ENCODE measurements at regions of chr2 and their contacts with region 1.

Region 1: DNA sequence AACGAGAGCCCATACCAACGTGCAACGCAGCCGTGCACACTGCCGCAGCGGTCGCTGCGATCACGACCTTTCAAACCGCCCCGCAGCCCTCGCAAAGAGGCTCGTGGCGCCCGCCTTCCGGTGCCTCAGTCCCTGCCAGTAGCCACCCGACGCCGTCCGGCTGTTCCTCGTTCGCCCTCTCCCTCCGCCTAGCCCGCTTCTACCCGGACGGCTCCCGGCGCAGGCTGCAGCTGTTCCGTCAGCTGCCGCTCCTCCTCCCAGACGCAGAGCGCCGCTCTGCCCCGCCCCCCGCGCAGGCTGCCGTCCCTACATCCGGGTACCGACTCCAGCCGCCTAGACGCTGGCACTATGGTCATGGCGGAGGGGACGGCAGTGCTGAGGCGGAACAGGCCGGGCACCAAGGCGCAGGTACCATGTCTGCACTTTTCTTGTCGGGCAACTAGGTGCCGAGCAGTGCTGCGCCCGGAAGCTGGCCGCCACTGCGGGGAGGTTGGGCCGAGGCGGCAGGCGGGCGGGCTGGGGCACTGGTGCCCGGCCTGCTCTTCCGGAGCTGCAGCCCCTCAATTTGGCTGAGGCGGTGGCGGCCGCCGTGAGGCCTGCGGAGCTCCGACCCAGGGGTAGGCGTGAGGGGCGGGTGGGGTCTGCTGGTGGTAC is at the start of gene MOB4:
- DNase-seq: peak; percentile 80 to 96 (median 89)
- ATAC-seq: peak; percentile 89 to 95 (median 90)
- H3K4me3 ChIP-seq: peak within 1 kb of the TSS; percentile 72 to 85
- H3K4me3 Mint-ChIP-seq: peak within 1 kb of the TSS; percentile 80 to 98 (median 97)
- H3K27ac ChIP-seq: peak within 1 kb of the TSS; percentile 93
- H3K27ac Mint-ChIP-seq: peak within 1 kb of the TSS; percentile 95 to 96
- H3K4me1 ChIP-seq: peaks cover 10 to 16% of the 10 kb centered on the region in 2 experiments
- H3K4me1 Mint-ChIP-seq: peaks cover 45 to 49% (median 46%) of the 10 kb centered on the region in 3 donors
- H3K27me3 ChIP-seq: no peaks in the 10 kb centered on the region
- H3K27me3 Mint-ChIP-seq: no peaks in the 10 kb centered on the region
- total RNA-seq, gene MOB4: 16.6 to 20.2 (median 17.7) TPM

Region 2: DNA sequence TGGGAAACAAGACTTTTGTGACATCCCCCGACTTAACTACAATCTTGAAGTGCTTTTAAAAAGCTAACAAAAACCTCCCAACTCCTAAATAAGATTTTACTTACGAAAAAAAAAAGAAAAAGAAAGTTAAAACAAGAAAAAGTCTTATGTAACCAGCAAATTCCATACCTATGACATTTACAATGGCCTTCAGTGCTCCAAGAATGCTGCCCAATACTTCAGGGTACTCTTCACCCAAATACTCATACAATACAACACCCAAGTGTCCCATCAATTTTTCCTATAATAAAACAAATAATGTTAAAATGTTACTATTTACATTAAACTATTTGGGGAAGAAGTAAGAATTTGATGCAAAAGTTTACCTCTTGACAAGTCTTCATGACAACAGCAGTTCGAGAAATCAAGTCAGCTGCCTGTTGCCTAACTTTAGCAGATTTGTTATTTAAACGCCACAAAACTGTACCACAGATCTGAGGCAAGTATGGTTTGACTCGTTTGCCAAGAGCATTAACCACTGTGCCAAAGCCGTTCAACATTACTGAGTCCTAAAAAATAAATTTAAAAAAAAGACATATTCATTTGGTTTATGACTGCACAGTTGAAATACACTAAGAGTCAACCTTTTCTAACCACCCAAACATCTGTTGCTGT is 115.9 kb before region 1 on chr2:
- CTCF ChIA-PET with region 1: no interaction called
- POLR2A ChIA-PET with region 1: interaction called in 1 of 2 experiments, 16 read pairs
- DNase-seq: no peak
- ATAC-seq: no peak
- H3K4me3 ChIP-seq: no peak overlapping the region
- H3K4me3 Mint-ChIP-seq: no peak overlapping the region
- H3K27ac ChIP-seq: no peak overlapping the region
- H3K27ac Mint-ChIP-seq: no peak overlapping the region
- H3K4me1 ChIP-seq: no peaks in the 10 kb centered on the region
- H3K4me1 Mint-ChIP-seq: peaks cover 0 to 1% (median 0%) of the 10 kb centered on the region in 3 donors
- H3K27me3 ChIP-seq: no peaks in the 10 kb centered on the region
- H3K27me3 Mint-ChIP-seq: no peaks in the 10 kb centered on the region

Region 3: GRCh38 chr2:197499594-197500526 is 16.0 kb before region 1 on chr2 and contains the starts of genes HSPD1 and HSPE1:
- CTCF ChIA-PET with region 1: interaction called, 4 read pairs
- POLR2A ChIA-PET with region 1: interaction called, 7 to 36 read pairs
- DNase-seq: peak; percentile 91 to 98 (median 94)
- ATAC-seq: peak; percentile 80 to 90 (median 84)
- H3K4me3 ChIP-seq: peak within 1 kb of the TSS; percentile 64 to 91
- H3K4me3 Mint-ChIP-seq: peak within 1 kb of the TSS; percentile 92 to 97 (median 95)
- H3K27ac ChIP-seq: peak within 1 kb of the TSS; percentile 98
- H3K27ac Mint-ChIP-seq: peak within 1 kb of the TSS; percentile 91 to 98
- H3K4me1 ChIP-seq: peaks cover 23 to 31% of the 10 kb centered on the region in 2 experiments
- H3K4me1 Mint-ChIP-seq: peaks cover 66 to 70% (median 66%) of the 10 kb centered on the region in 3 donors
- H3K27me3 ChIP-seq: no peaks in the 10 kb centered on the region
- H3K27me3 Mint-ChIP-seq: no peaks in the 10 kb centered on the region
- total RNA-seq, gene HSPD1: 125 to 164 (median 130) TPM
- total RNA-seq, gene HSPE1: 49.9 to 72.7 (median 55.1) TPM

Measured in T-cell (primary cell).